GM12878 (cell line): ENCODE measurements at regions of chr19 and their contacts with region 1.

Region 1: DNA sequence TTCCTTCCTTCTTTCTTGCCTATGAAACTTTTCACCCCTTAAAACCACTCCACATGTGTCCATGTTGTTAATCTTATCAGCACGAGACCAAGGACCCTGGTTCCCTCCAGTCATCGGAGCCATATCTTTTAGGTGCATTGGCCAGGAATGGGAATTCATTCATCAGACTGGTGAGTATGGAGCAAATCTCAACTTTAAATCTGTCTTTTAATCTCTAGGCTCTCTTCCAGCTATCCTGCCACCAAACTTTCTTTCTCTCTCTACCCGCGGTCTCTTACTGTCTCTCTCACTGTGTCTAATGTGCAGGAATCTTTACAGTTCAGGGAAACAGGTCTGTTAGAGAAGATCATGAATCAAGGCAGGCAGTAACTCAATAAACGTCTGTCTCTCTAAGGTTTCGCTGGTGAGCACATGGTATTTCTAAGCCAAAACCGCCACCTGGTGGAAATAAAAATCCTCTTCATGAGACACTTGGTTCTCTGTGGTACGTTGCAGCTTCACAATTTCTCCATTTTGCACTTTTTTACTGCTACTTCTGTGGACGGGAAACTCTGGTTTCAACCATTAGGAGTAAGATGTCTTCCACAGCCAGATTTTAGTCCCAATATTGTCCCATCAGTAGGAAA is 16.1 kb downstream of the LGALS16 start:
- DNase-seq: no peak
- ATAC-seq: peak; percentile 80
- H3K4me3 ChIP-seq: no peak overlapping the region
- H3K27ac ChIP-seq: no peak overlapping the region
- H3K4me1 ChIP-seq: peaks cover 15% of the 10 kb centered on the region
- H3K27me3 ChIP-seq: no peaks in the 10 kb centered on the region
- CTCF ChIP-seq: peak; percentile 42 to 80 (median 66); a peak in 5 of 6 replicates
- EP300 ChIP-seq: no peak
- POLR2A ChIP-seq: no peak
- RAD21 ChIP-seq: peak; percentile 99

Region 2: GRCh38 chr19:39014037-39014436 is 657.8 kb before region 1 on chr19:
- CTCF ChIA-PET with region 1: no interaction called
- POLR2A ChIA-PET with region 1: no interaction called
- RAD21 ChIA-PET with region 1: no interaction called
- SMC1A ChIA-PET with region 1: no interaction called
- in situ Hi-C with region 1: no loop called
- intact Hi-C with region 1: no loop called
- DNase-seq: no peak
- ATAC-seq: no peak
- H3K4me3 ChIP-seq: no peak overlapping the region
- H3K27ac ChIP-seq: no peak overlapping the region
- H3K4me1 ChIP-seq: peaks cover 4% of the 10 kb centered on the region; the same call in 1 of the 2 replicates
- H3K27me3 ChIP-seq: no peaks in the 10 kb centered on the region
- CTCF ChIP-seq: no peak
- EP300 ChIP-seq: no peak
- POLR2A ChIP-seq: no peak
- RAD21 ChIP-seq: no peak

Region 3: DNA sequence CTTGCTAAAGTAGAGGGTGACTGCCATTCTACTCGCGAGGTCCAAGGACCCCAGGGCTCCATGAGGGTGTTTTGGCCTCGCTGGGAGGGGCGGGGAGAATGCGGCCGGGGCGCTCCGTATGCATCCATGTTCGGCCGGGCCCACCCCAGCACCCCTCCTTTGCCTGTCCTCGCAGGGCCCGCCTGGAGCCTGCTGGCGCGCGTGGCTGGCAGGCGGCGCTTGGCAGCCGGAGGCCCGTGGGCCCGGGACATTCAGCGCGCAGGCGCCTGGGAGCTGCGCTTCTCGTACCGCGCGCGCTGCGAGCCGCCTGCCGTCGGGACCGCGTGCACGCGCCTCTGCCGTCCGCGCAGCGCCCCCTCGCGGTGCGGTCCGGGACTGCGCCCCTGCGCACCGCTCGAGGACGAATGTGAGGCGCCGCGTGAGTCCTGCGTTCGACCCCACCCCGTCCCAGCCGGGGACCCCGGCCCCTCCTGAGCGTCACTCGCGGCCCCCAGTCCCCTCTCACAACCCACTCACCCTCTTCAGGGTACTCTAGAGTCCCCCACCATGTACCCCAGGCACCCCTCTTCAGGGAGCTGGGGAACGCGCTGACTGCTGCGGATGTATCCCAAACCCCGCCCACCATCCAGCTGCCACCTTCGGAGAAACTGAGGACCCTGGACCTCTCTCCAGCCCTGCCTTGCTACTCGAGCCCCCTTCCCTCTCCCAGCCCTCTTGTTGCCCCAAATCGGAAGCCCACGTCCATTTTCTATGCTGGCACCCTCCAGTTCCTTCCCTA is 169.0 kb before region 1 on chr19:
- CTCF ChIA-PET with region 1: interaction called, 16 read pairs
- POLR2A ChIA-PET with region 1: no interaction called
- RAD21 ChIA-PET with region 1: no interaction called
- SMC1A ChIA-PET with region 1: interaction called, 4 read pairs
- in situ Hi-C with region 1: no loop called
- intact Hi-C with region 1: no loop called
- DNase-seq: no peak
- ATAC-seq: peak; percentile 46
- H3K4me3 ChIP-seq: no peak overlapping the region
- H3K27ac ChIP-seq: no peak overlapping the region
- H3K4me1 ChIP-seq: peaks cover 15% of the 10 kb centered on the region
- H3K27me3 ChIP-seq: peaks cover 0 to 16% of the 10 kb centered on the region in 2 experiments; a peak in 3 of 4 replicates
- CTCF ChIP-seq: peak; percentile 70 to 80 (median 75)
- EP300 ChIP-seq: no peak
- POLR2A ChIP-seq: no peak
- RAD21 ChIP-seq: peak; percentile 30; the same call in 1 of the 2 replicates

Region 4: GRCh38 chr19:39557441-39558151 is 114.3 kb before region 1 on chr19:
- CTCF ChIA-PET with region 1: interaction called, 248 read pairs
- POLR2A ChIA-PET with region 1: no interaction called
- RAD21 ChIA-PET with region 1: interaction called, 105 read pairs
- SMC1A ChIA-PET with region 1: interaction called, 105 read pairs
- in situ Hi-C with region 1: loop called (anchors 5 kb)
- intact Hi-C with region 1: no loop called
- DNase-seq: peak; percentile 41
- ATAC-seq: peak; percentile 91
- H3K4me3 ChIP-seq: peak overlapping the region; percentile 52
- H3K27ac ChIP-seq: peak overlapping the region; percentile 88
- H3K4me1 ChIP-seq: peaks cover 34% of the 10 kb centered on the region
- H3K27me3 ChIP-seq: no peaks in the 10 kb centered on the region
- CTCF ChIP-seq: no peak
- EP300 ChIP-seq: no peak
- POLR2A ChIP-seq: no peak
- RAD21 ChIP-seq: no peak

Region 5: GRCh38 chr19:39759457-39760184 is 87.8 kb after region 1 on chr19:
- CTCF ChIA-PET with region 1: interaction called, 29 read pairs
- POLR2A ChIA-PET with region 1: interaction called, 6 read pairs
- RAD21 ChIA-PET with region 1: interaction called, 11 read pairs
- SMC1A ChIA-PET with region 1: interaction called, 19 read pairs
- in situ Hi-C with region 1: no loop called
- intact Hi-C with region 1: no loop called
- DNase-seq: peak; percentile 65
- ATAC-seq: peak; percentile 97
- H3K4me3 ChIP-seq: peak overlapping the region; percentile 15; the same call in 1 of the 2 replicates
- H3K27ac ChIP-seq: peak overlapping the region; percentile 68
- H3K4me1 ChIP-seq: peaks cover 22% of the 10 kb centered on the region
- H3K27me3 ChIP-seq: no peaks in the 10 kb centered on the region
- CTCF ChIP-seq: no peak
- EP300 ChIP-seq: peak; percentile 30 to 65; a peak in 3 of 4 replicates
- POLR2A ChIP-seq: no peak
- RAD21 ChIP-seq: no peak

Region 6: DNA sequence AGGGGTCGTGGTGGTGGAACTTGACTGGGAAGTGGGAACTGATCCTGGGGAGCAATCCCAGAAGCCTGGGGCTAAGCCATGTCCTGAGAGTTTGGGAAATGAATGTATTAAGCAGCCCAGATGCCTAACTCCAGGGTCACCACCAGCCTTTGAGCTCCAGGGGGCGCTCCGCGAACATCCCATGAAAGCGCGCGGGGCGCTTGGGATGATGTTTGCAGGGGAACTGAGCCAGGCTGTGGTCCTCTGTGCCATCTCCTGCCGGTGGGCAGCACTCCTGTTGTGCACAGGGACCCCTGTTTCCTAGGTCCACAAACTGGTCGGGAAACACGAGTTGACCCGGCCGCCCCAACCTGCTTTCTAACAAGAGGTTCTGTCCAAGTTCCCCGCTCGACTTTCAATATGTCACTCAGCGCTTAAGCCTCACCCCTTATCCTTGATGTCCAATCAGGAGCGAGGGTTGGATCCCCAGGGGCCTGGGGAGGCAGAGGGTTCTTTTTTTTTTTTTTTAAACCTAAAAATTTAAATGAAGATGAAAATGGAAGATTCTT is 121.2 kb after region 1 on chr19:
- CTCF ChIA-PET with region 1: interaction called, 84 read pairs
- POLR2A ChIA-PET with region 1: interaction called, 3 read pairs
- RAD21 ChIA-PET with region 1: interaction called, 66 read pairs
- SMC1A ChIA-PET with region 1: interaction called, 67 read pairs
- in situ Hi-C with region 1: no loop called
- intact Hi-C with region 1: no loop called
- DNase-seq: peak; percentile 40
- ATAC-seq: peak; percentile 97
- H3K4me3 ChIP-seq: peak overlapping the region; percentile 66
- H3K27ac ChIP-seq: peak overlapping the region; percentile 40; the same call in 1 of the 2 replicates
- H3K4me1 ChIP-seq: peaks cover 16% of the 10 kb centered on the region
- H3K27me3 ChIP-seq: no peaks in the 10 kb centered on the region
- CTCF ChIP-seq: peak; percentile 91 to 96 (median 94)
- EP300 ChIP-seq: no peak
- POLR2A ChIP-seq: no peak
- RAD21 ChIP-seq: peak; percentile 96

Region 7: GRCh38 chr19:39833464-39834286 is 161.8 kb after region 1 on chr19 and contains the start of gene DYRK1B:
- CTCF ChIA-PET with region 1: interaction called, 10 read pairs
- POLR2A ChIA-PET with region 1: interaction called, 4 read pairs
- RAD21 ChIA-PET with region 1: interaction called, 29 read pairs
- SMC1A ChIA-PET with region 1: interaction called, 20 read pairs
- in situ Hi-C with region 1: no loop called
- intact Hi-C with region 1: no loop called
- DNase-seq: peak; percentile 92
- ATAC-seq: peak; percentile 98
- H3K4me3 ChIP-seq: peak within 1 kb of the TSS; percentile 97
- H3K27ac ChIP-seq: peak within 1 kb of the TSS; percentile 51
- H3K4me1 ChIP-seq: peaks cover 15% of the 10 kb centered on the region
- H3K27me3 ChIP-seq: no peaks in the 10 kb centered on the region
- CTCF ChIP-seq: no peak
- EP300 ChIP-seq: peak in 1 of 2 experiments; percentile 70; a peak in 2 of 4 replicates
- POLR2A ChIP-seq: peak; percentile 69
- RAD21 ChIP-seq: no peak
- polyA plus RNA-seq, gene DYRK1B: 0.07 TPM in 1 of 2 experiments, not detected in the other

Region 8: GRCh38 chr19:40081411-40081810 is 409.6 kb after region 1 on chr19:
- CTCF ChIA-PET with region 1: no interaction called
- POLR2A ChIA-PET with region 1: no interaction called
- RAD21 ChIA-PET with region 1: no interaction called
- SMC1A ChIA-PET with region 1: no interaction called
- in situ Hi-C with region 1: no loop called
- intact Hi-C with region 1: no loop called
- DNase-seq: no peak
- ATAC-seq: no peak
- H3K4me3 ChIP-seq: no peak overlapping the region
- H3K27ac ChIP-seq: no peak overlapping the region
- H3K4me1 ChIP-seq: no peaks in the 10 kb centered on the region
- H3K27me3 ChIP-seq: no peaks in the 10 kb centered on the region
- CTCF ChIP-seq: no peak
- EP300 ChIP-seq: no peak
- POLR2A ChIP-seq: no peak
- RAD21 ChIP-seq: no peak